Naive thymus-derived CD4-positive, alpha-beta T cell (primary cell): ENCODE measurements at regions of chr3 and their contacts with region 1.

Region 1: GRCh38 chr3:71444028-71444860 is 139.3 kb downstream of the FOXP1 start:
- DNase-seq: peak; percentile 57 to 97 (median 94)
- ATAC-seq: peak; percentile 88
- H3K4me3 ChIP-seq: peak overlapping the region; percentile 12
- H3K4me3 Mint-ChIP-seq: peak overlapping the region; percentile 64 to 86 (median 77)
- H3K27ac ChIP-seq: peak overlapping the region; percentile 90
- H3K27ac Mint-ChIP-seq: peak overlapping the region; percentile 94 to 100 (median 99)
- H3K4me1 ChIP-seq: peaks cover 93 to 96% of the 10 kb centered on the region in 2 donors
- H3K4me1 Mint-ChIP-seq: peaks cover 70 to 100% (median 96%) of the 10 kb centered on the region in 7 donors
- H3K27me3 ChIP-seq: no peaks in the 10 kb centered on the region
- H3K27me3 Mint-ChIP-seq: peaks cover 0 to 2% (median 0%) of the 10 kb centered on the region in 5 donors

Region 2: GRCh38 chr3:71006810-71007785 is 437.1 kb before region 1 on chr3:
- CTCF ChIA-PET with region 1: no interaction called
- POLR2A ChIA-PET with region 1: no interaction called
- intact Hi-C with region 1: loop called in 1 of 2 experiments (anchors 2 kb)
- DNase-seq: peak in 5 of 9 donors; percentile 25 to 45 (median 40)
- ATAC-seq: peak; percentile 54
- H3K4me3 ChIP-seq: no peak overlapping the region
- H3K4me3 Mint-ChIP-seq: peak overlapping the region in 5 of 10 donors; percentile 34 to 62 (median 49)
- H3K27ac ChIP-seq: peak overlapping the region; percentile 74
- H3K27ac Mint-ChIP-seq: peak overlapping the region in 8 of 9 donors; percentile 40 to 91 (median 87)
- H3K4me1 ChIP-seq: peaks cover 20 to 49% of the 10 kb centered on the region in 2 donors
- H3K4me1 Mint-ChIP-seq: peaks cover 35 to 84% (median 75%) of the 10 kb centered on the region in 7 donors
- H3K27me3 ChIP-seq: no peaks in the 10 kb centered on the region
- H3K27me3 Mint-ChIP-seq: no peaks in the 10 kb centered on the region

Region 3: GRCh38 chr3:71226565-71227269 is 217.5 kb before region 1 on chr3:
- CTCF ChIA-PET with region 1: no interaction called
- POLR2A ChIA-PET with region 1: interaction called, 3 read pairs
- intact Hi-C with region 1: loop called in 1 of 2 experiments (anchors 2 kb)
- DNase-seq: peak; percentile 34 to 89 (median 65)
- ATAC-seq: peak; percentile 86
- H3K4me3 ChIP-seq: peak overlapping the region; percentile 48
- H3K4me3 Mint-ChIP-seq: peak overlapping the region; percentile 51 to 85 (median 79)
- H3K27ac ChIP-seq: peak overlapping the region; percentile 59
- H3K27ac Mint-ChIP-seq: peak overlapping the region; percentile 85 to 97 (median 90)
- H3K4me1 ChIP-seq: peaks cover 21 to 64% of the 10 kb centered on the region in 2 donors
- H3K4me1 Mint-ChIP-seq: peaks cover 30 to 91% (median 88%) of the 10 kb centered on the region in 7 donors
- H3K27me3 ChIP-seq: no peaks in the 10 kb centered on the region
- H3K27me3 Mint-ChIP-seq: peaks cover 0 to 52% (median 0%) of the 10 kb centered on the region in 5 donors

Region 4: GRCh38 chr3:71397046-71397445 is 47.2 kb before region 1 on chr3:
- CTCF ChIA-PET with region 1: no interaction called
- POLR2A ChIA-PET with region 1: interaction called, 5 read pairs
- intact Hi-C with region 1: loop called in 1 of 2 experiments (anchors 2 kb)
- DNase-seq: no peak
- ATAC-seq: no peak
- H3K4me3 ChIP-seq: peak overlapping the region; percentile 3
- H3K4me3 Mint-ChIP-seq: peak overlapping the region in 9 of 10 donors; percentile 54 to 80 (median 73)
- H3K27ac ChIP-seq: peak overlapping the region; percentile 86
- H3K27ac Mint-ChIP-seq: peak overlapping the region in 8 of 9 donors; percentile 81 to 98 (median 92)
- H3K4me1 ChIP-seq: peaks cover 39 to 79% of the 10 kb centered on the region in 2 donors
- H3K4me1 Mint-ChIP-seq: peaks cover 23 to 95% (median 84%) of the 10 kb centered on the region in 7 donors
- H3K27me3 ChIP-seq: no peaks in the 10 kb centered on the region
- H3K27me3 Mint-ChIP-seq: peaks cover 0 to 52% (median 0%) of the 10 kb centered on the region in 5 donors

Region 5: GRCh38 chr3:71428841-71429596 is 15.2 kb before region 1 on chr3:
- CTCF ChIA-PET with region 1: interaction called, 7 read pairs
- POLR2A ChIA-PET with region 1: interaction called, 356 read pairs
- intact Hi-C with region 1: loop called in 1 of 2 experiments (anchors 1 kb)
- DNase-seq: peak in 1 of 9 donors; percentile 43
- ATAC-seq: peak; percentile 26
- H3K4me3 ChIP-seq: peak overlapping the region; percentile 23
- H3K4me3 Mint-ChIP-seq: peak overlapping the region in 9 of 10 donors; percentile 65 to 81 (median 77)
- H3K27ac ChIP-seq: peak overlapping the region; percentile 68
- H3K27ac Mint-ChIP-seq: peak overlapping the region; percentile 7 to 99 (median 95)
- H3K4me1 ChIP-seq: peaks cover 25 to 88% of the 10 kb centered on the region in 2 donors
- H3K4me1 Mint-ChIP-seq: peaks cover 55 to 100% (median 97%) of the 10 kb centered on the region in 7 donors
- H3K27me3 ChIP-seq: no peaks in the 10 kb centered on the region
- H3K27me3 Mint-ChIP-seq: peaks cover 0 to 31% (median 0%) of the 10 kb centered on the region in 5 donors

Region 6: GRCh38 chr3:71495708-71496472 is 51.6 kb after region 1 on chr3:
- CTCF ChIA-PET with region 1: interaction called, 7 read pairs
- POLR2A ChIA-PET with region 1: interaction called, 182 read pairs
- intact Hi-C with region 1: loop called (anchors 1 kb)
- DNase-seq: peak in 2 of 9 donors; percentile 24 to 34
- ATAC-seq: no peak
- H3K4me3 ChIP-seq: peak overlapping the region; percentile 33
- H3K4me3 Mint-ChIP-seq: peak overlapping the region; percentile 52 to 98 (median 80)
- H3K27ac ChIP-seq: peak overlapping the region; percentile 89
- H3K27ac Mint-ChIP-seq: peak overlapping the region; percentile 77 to 100 (median 98)
- H3K4me1 ChIP-seq: peaks cover 43 to 71% of the 10 kb centered on the region in 2 donors
- H3K4me1 Mint-ChIP-seq: peaks cover 54 to 90% (median 85%) of the 10 kb centered on the region in 7 donors
- H3K27me3 ChIP-seq: no peaks in the 10 kb centered on the region
- H3K27me3 Mint-ChIP-seq: no peaks in the 10 kb centered on the region

Region 7: DNA sequence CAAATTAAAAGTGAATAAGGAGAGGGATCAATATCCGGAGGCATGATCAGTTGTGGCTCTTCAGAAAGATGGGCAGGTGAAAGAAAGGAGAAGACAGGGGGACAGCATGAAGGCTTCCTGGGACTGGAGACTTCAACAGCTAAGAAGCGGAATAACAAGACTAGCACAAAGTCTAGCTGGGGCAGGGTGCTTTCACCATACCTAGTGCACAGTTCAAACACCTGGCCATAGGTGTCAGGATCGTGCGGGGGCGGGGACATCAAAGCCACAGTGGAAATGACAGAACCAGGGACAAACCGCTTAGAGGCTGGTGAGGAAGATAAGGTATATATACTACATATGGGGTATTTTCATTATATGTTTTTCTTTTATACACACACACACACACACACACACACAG is 205.5 kb after region 1 on chr3:
- CTCF ChIA-PET with region 1: no interaction called
- POLR2A ChIA-PET with region 1: no interaction called
- intact Hi-C with region 1: no loop called
- DNase-seq: no peak
- ATAC-seq: no peak
- H3K4me3 ChIP-seq: no peak overlapping the region
- H3K4me3 Mint-ChIP-seq: no peak overlapping the region
- H3K27ac ChIP-seq: no peak overlapping the region
- H3K27ac Mint-ChIP-seq: no peak overlapping the region
- H3K4me1 ChIP-seq: no peaks in the 10 kb centered on the region
- H3K4me1 Mint-ChIP-seq: peaks cover 0 to 6% (median 0%) of the 10 kb centered on the region in 7 donors
- H3K27me3 ChIP-seq: no peaks in the 10 kb centered on the region
- H3K27me3 Mint-ChIP-seq: peaks cover 0 to 2% (median 0%) of the 10 kb centered on the region in 5 donors